ENCODE measurements at regions of chr12 and their contacts with region 1.

Region 1: DNA sequence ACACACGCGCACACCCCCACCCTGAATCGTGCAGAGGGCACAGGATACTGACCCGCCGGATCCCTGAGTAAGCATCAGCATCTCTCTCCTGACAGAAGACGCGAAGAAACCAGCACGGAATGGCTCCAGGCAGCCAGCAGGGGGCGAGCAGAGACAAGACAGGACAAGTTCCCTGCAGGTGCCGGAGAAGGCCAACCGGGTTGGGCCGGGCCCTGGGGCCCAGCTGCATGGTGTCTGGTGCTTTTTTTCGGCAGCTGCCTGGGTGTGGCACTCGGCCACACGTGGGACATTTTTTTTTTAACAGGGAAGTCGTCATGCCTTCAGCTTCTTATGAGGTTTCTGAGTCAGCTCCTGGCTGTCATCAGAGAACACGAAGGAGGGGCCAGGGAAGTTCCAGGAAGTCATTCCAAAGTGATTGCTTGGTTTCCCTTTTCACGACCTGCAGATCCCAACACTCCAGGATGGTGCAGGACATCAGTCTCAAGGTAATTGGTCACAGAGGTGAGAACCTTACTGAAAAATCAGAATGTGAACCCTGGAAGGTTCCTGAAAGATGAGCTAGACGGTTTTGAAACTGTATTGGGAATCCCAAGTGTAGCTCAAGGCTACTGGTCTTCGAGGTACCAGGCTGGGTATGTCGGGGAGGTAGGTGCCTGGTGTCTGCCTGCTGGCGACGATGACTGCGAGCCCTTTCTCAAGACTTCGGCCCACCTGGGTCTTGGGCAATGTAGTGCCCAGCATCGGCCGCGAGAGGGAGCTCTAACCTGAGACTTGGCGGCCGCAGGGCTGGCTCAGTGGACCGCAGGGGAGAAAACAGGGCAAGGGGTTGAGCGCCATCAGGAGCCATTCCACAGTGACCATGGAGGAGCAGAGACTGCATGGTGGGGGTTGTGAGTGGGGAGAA is 190.8 kb upstream of the PRMT8 start:
- DNase-seq: peak; percentile 24
- ATAC-seq: peak; percentile 93
- H3K4me3 ChIP-seq: no peak overlapping the region
- H3K27ac ChIP-seq: no peak overlapping the region
- H3K4me1 ChIP-seq: no peaks in the 10 kb centered on the region
- H3K27me3 ChIP-seq: peaks cover 0 to 1% of the 10 kb centered on the region in 2 experiments; a peak in 2 of 4 replicates
- CTCF ChIP-seq: peak; percentile 88 to 97 (median 96)
- EP300 ChIP-seq: no peak
- POLR2A ChIP-seq: no peak
- RAD21 ChIP-seq: peak; percentile 86

Region 2: GRCh38 chr12:3168223-3169221 is 131.7 kb before region 1 on chr12:
- CTCF ChIA-PET with region 1: interaction called, 10 read pairs
- POLR2A ChIA-PET with region 1: no interaction called
- RAD21 ChIA-PET with region 1: no interaction called
- SMC1A ChIA-PET with region 1: no interaction called
- in situ Hi-C with region 1: no loop called
- intact Hi-C with region 1: no loop called
- DNase-seq: no peak
- ATAC-seq: peak; percentile 65
- H3K4me3 ChIP-seq: no peak overlapping the region
- H3K27ac ChIP-seq: no peak overlapping the region
- H3K4me1 ChIP-seq: no peaks in the 10 kb centered on the region
- H3K27me3 ChIP-seq: peaks cover 0 to 9% of the 10 kb centered on the region in 2 experiments; a peak in 2 of 4 replicates
- CTCF ChIP-seq: no peak
- EP300 ChIP-seq: no peak
- POLR2A ChIP-seq: no peak
- RAD21 ChIP-seq: no peak

Region 3: DNA sequence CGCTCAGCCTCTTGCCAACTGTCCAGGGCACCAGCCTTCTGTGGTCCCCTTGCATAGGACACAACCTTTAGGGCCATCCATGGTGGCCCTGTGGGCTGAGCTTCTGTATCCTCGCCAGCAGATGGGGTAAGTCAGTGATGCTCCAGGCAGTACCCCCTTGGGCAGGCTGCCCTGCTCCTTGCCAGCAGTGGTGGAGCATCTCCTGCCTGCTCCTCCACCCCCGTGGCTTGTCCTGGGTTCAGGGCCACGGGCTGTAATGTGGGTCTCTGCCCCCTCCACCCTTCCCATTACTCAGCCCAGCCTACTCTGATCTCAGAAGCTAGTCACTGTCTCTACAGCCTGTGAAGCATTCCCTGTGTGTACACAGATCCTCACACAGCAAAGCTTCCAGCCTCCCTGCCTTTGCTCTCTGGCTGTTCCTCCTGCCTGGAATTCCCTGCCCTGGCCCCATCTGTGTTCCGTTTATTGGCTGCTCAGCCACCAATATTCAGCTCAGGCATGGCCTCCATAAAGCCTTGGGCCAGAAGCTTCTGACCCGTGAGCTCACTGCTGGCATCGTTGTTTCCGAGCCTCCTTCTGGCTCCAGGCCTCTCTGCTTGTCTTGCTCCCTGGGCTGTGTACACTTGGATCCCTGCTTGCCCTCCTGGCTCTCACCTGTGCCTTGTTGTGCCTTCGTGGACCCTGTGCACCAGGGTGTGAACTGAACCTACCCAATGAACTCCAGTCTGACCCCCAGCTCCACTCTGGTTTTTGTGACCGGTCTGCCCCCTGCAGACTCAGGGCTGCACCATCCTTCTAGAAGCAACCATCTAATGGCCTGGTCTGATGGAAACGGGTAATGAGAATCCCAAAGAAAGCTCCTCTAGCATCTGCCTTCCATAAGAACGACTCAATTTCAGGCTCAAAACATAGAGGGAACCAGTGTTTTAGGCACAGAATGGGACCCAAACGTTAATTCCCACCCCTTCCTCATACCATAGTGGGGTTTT is 13.8 kb after region 1 on chr12:
- CTCF ChIA-PET with region 1: interaction called, 18 read pairs
- POLR2A ChIA-PET with region 1: no interaction called
- RAD21 ChIA-PET with region 1: interaction called, 10 read pairs
- SMC1A ChIA-PET with region 1: interaction called, 3 read pairs
- in situ Hi-C with region 1: no loop called
- intact Hi-C with region 1: no loop called
- DNase-seq: no peak
- ATAC-seq: peak; percentile 91
- H3K4me3 ChIP-seq: no peak overlapping the region
- H3K27ac ChIP-seq: no peak overlapping the region
- H3K4me1 ChIP-seq: no peaks in the 10 kb centered on the region
- H3K27me3 ChIP-seq: no peaks in the 10 kb centered on the region; a peak in 2 of 4 replicates
- CTCF ChIP-seq: peak; percentile 40 to 44 (median 41); a peak in 5 of 6 replicates
- EP300 ChIP-seq: no peak
- POLR2A ChIP-seq: no peak
- RAD21 ChIP-seq: peak; percentile 34

Region 4: DNA sequence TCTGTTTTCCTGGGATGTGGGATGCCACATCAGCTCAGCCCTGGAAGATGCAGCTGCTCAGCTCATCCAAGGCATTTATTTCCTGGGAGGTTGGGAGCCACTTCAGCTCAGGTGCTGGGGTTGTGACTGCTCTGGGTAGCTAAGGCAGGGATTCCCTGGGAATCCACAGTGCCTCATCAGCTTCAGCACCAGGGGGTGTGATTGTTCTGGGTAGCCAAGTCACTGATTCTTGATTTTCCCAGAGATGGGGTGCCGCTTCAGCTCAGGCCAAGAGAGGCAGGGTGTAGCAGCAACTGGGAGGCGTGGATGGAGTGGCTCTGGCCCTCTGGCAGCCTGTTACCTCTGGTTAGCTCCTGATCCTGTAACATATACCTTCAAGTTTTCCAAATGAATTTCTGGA is 109.5 kb after region 1 on chr12:
- CTCF ChIA-PET with region 1: no interaction called
- POLR2A ChIA-PET with region 1: no interaction called
- RAD21 ChIA-PET with region 1: no interaction called
- SMC1A ChIA-PET with region 1: no interaction called
- in situ Hi-C with region 1: no loop called
- intact Hi-C with region 1: no loop called
- DNase-seq: no peak
- ATAC-seq: no peak
- H3K4me3 ChIP-seq: no peak overlapping the region
- H3K27ac ChIP-seq: no peak overlapping the region
- H3K4me1 ChIP-seq: no peaks in the 10 kb centered on the region
- H3K27me3 ChIP-seq: no peaks in the 10 kb centered on the region
- CTCF ChIP-seq: no peak
- EP300 ChIP-seq: no peak
- POLR2A ChIP-seq: no peak
- RAD21 ChIP-seq: no peak

Region 5: GRCh38 chr12:3789838-3790237 is 489.7 kb after region 1 on chr12:
- CTCF ChIA-PET with region 1: interaction called, 11 read pairs
- POLR2A ChIA-PET with region 1: no interaction called
- RAD21 ChIA-PET with region 1: interaction called, 4 read pairs
- SMC1A ChIA-PET with region 1: interaction called, 9 read pairs
- in situ Hi-C with region 1: no loop called
- intact Hi-C with region 1: no loop called
- DNase-seq: no peak
- ATAC-seq: no peak
- H3K4me3 ChIP-seq: no peak overlapping the region
- H3K27ac ChIP-seq: no peak overlapping the region
- H3K4me1 ChIP-seq: no peaks in the 10 kb centered on the region
- H3K27me3 ChIP-seq: no peaks in the 10 kb centered on the region
- CTCF ChIP-seq: no peak
- EP300 ChIP-seq: no peak
- POLR2A ChIP-seq: no peak
- RAD21 ChIP-seq: no peak

Region 6: DNA sequence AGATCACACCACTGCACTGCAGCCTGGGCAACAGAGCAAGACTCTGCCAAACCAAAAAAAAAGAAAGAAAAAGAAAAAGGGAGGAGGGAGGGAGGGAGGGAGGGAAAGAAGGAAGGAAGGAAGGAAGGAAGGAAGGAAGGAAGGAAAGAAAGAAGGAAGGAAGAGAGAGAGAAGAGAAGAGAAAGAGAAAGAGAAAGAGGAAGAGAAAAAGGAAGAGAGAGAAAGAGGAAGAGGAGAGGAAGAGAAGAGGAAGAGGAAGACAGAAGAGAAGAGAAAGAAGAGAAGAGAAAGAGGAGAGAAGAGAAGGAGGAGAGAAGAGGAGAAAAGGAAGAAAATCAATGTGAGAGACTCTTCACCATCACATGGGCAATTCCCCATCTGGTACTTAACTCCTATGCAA is 510.4 kb after region 1 on chr12:
- CTCF ChIA-PET with region 1: interaction called, 179 read pairs
- POLR2A ChIA-PET with region 1: no interaction called
- RAD21 ChIA-PET with region 1: interaction called, 47 read pairs
- SMC1A ChIA-PET with region 1: interaction called, 58 read pairs
- in situ Hi-C with region 1: no loop called
- intact Hi-C with region 1: no loop called
- DNase-seq: no peak
- ATAC-seq: no peak
- H3K4me3 ChIP-seq: no peak overlapping the region
- H3K27ac ChIP-seq: no peak overlapping the region
- H3K4me1 ChIP-seq: no peaks in the 10 kb centered on the region
- H3K27me3 ChIP-seq: no peaks in the 10 kb centered on the region
- CTCF ChIP-seq: no peak
- EP300 ChIP-seq: no peak
- POLR2A ChIP-seq: no peak
- RAD21 ChIP-seq: no peak

Region 7: GRCh38 chr12:3837049-3837448 is 536.9 kb after region 1 on chr12:
- CTCF ChIA-PET with region 1: interaction called, 18 read pairs
- POLR2A ChIA-PET with region 1: no interaction called
- RAD21 ChIA-PET with region 1: interaction called, 7 read pairs
- SMC1A ChIA-PET with region 1: interaction called, 14 read pairs
- in situ Hi-C with region 1: no loop called
- intact Hi-C with region 1: no loop called
- DNase-seq: no peak
- ATAC-seq: peak; percentile 64
- H3K4me3 ChIP-seq: no peak overlapping the region
- H3K27ac ChIP-seq: no peak overlapping the region
- H3K4me1 ChIP-seq: peaks cover 11% of the 10 kb centered on the region; the same call in 1 of the 2 replicates
- H3K27me3 ChIP-seq: no peaks in the 10 kb centered on the region
- CTCF ChIP-seq: peak; percentile 26 to 52 (median 29); a peak in 5 of 6 replicates
- EP300 ChIP-seq: no peak
- POLR2A ChIP-seq: no peak
- RAD21 ChIP-seq: peak; percentile 48